ENCODE measurements at regions of chr6 and their contacts with region 1.

Region 1: GRCh38 chr6:43769526-43770416 is at the start of gene VEGFA:
- DNase-seq: peak; percentile 77
- H3K4me3 ChIP-seq: peak within 1 kb of the TSS; percentile 98
- CTCF ChIP-seq: peak; percentile 99

Region 2: DNA sequence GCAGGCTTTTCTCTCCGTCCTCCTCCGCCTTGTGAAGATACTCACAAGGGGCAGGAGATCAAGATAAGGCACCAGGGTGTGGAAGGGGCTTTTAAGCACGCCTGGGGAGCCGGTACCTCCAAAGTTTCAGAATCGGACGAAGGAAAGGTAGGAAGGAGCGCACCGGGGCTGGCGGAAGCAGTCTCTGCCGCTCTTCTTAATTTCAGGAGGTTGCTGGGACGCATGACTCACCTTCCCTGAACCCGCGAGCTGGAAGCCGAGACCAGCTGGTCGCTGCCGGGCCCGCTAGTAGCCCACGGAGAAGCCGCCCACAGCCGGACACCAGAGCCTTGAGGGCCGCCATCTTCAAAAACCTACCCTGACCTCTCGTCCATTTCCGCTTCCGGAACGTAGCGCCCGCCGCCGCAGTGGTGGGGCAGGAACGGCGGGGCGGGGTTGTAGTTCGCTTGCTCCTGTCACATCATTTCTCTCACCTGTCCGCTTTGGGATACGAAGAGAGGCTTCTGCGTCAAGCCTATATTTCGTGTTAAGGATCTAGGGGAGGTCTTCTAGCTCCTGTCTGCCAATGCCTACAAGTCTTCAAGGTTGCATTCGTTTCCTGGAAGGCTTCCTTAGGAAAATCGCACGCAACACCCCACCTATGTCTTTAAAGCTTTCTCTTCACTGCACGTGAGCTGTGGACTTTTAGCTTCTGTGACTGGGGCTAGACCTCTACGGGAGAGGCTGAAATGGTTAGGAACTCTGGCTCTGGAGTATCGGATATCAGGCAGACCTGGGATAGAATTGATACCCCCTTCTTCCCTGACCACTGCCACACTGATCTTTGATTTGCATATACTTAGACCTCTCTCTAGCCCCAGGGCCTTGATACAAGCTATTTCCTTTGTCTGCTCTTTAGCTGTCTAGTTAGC is 82.1 kb before region 1 on chr6 and contains the start of gene MRPS18A:
- CTCF ChIA-PET with region 1: interaction called, 14 read pairs
- POLR2A ChIA-PET with region 1: interaction called, 7 read pairs
- DNase-seq: no peak
- H3K4me3 ChIP-seq: peak within 1 kb of the TSS; percentile 92
- CTCF ChIP-seq: no peak

Region 3: GRCh38 chr6:43758617-43759050 is 11.1 kb before region 1 on chr6:
- CTCF ChIA-PET with region 1: interaction called, 42 read pairs
- POLR2A ChIA-PET with region 1: interaction called, 3 read pairs
- DNase-seq: no peak
- H3K4me3 ChIP-seq: no peak overlapping the region
- CTCF ChIP-seq: peak; percentile 65

Region 4: GRCh38 chr6:43916924-43917877 is 147.4 kb after region 1 on chr6:
- CTCF ChIA-PET with region 1: interaction called, 13 read pairs
- POLR2A ChIA-PET with region 1: interaction called, 6 read pairs
- DNase-seq: no peak
- H3K4me3 ChIP-seq: no peak overlapping the region
- CTCF ChIP-seq: no peak

Region 5: DNA sequence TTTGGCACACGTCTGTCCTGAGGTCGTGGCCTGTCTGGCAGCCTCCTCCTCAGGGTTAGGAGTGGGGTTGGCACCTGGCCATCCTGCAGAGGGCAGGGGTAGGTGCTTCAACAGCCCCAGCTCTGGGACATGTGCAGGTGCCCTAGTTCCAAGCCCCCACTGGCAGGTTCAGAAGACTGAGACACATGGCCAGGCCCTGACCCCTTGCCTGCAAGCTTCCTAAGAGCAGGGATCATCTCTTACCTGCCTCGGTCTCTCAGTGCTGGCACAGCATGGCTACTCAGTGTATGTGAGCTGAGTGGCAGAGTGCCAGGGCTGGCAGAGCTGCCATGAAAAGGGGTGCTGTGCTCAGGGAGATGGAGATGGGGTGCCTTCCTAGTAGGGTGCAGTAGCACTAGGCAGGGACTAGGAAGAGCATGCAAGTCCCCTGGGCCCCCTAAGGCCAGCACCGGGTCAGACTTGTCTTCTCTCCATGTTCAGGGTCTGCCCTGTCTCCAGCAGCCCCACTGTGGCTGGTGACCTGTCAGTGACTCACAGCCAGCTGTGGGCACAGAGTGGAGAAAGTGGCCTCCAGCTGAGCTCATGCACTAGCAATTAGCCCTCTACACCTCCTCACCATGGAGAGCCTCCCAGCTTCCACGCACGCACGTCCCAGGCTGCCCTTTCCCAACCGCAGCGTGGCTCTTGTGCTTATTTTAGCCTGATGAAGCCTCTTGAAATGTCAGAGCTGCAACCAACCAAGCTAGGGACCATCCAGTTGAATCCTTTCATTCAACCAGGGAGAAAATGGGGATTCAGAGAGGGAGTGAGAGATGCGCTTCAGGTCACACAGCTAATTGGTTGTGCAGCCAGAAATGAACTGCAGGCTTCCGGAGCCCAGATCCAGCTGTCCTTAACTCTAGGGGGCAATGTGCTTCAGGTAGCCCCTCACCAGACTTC is 240.9 kb after region 1 on chr6:
- CTCF ChIA-PET with region 1: interaction called, 32 read pairs
- POLR2A ChIA-PET with region 1: interaction called, 25 read pairs
- DNase-seq: peak; percentile 99
- H3K4me3 ChIP-seq: no peak overlapping the region
- CTCF ChIP-seq: no peak

Region 6: DNA sequence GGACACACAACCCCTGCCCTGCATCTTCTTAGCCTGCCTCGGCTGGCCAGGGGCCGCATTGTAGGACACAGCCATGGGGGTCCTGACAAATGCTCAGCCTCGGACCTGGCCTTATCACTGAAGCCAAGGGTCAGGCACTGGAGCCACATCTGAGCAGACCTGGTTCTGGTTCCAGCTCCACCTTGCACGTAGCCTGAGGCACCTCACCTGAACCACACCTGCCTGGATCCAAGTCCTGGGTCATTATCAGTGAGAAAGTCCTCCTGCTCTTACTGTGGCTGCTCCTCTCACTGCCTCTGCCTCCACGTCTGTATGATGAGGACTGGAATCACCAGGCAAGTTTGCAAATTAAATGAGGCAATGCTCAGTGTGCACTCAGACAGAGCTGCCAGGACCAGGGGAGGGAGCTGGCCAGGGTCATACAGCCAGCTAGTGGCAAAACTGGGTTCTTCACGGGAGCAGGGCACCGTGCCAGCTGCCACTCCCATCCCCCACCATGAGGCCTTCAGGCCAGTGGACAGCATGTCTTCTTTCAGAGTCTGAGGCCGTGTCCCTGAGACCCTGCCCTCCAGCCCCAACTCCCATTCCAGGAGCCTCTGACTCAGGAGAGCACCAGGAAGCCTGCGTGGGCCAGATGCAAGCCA is 317.3 kb after region 1 on chr6:
- CTCF ChIA-PET with region 1: interaction called, 21 read pairs
- POLR2A ChIA-PET with region 1: no interaction called
- DNase-seq: no peak
- H3K4me3 ChIP-seq: no peak overlapping the region
- CTCF ChIP-seq: no peak

Measured in AG04449 (cell line).